CD8-positive, alpha-beta T cell (primary cell): ENCODE measurements at regions of chr4 and their contacts with region 1.

Region 1: DNA sequence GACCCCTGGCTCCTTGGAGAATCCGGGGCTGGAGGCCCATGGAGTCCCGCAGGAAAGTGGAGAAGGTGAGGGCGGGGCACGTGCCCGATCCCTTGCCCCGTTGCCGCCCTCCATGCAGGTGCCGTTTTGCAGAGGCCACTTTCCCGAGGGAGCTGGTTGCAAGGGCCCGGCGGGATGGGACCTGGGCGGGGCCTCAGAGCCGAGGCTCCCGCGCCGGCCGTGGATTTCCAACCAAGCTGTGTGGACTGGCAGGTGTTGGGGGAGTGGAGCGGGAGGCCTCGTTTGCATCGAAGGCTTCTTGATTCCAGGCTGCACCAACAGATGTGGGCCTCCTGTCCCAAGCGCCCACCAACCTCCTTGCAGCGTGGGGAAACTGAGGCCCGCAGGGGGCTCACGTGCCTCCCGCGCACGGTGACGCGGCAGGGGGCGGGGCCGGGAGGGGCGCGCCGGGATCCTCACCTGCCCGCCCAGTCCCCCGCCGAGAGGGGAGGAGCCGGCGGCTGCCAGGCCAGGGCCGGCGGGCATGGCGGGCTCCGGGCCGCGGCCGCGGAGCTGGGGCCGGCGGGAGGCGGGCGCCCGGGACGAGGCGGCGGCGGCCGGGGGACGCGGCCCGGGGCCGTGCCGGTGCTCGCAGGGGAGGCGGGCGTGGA is 24.9 kb downstream of the SH3BP2 start:
- DNase-seq: peak in 5 of 9 experiments; percentile 28 to 64 (median 52)
- ATAC-seq: peak; percentile 55
- H3K4me3 ChIP-seq: peak overlapping the region; percentile 39 to 45
- H3K4me3 Mint-ChIP-seq: peak overlapping the region; percentile 87
- H3K27ac ChIP-seq: peak overlapping the region in 1 of 2 experiments; percentile 37
- H3K27ac Mint-ChIP-seq: no peak overlapping the region
- H3K4me1 ChIP-seq: peaks cover 57% of the 10 kb centered on the region
- H3K4me1 Mint-ChIP-seq: peaks cover 63% of the 10 kb centered on the region
- H3K27me3 ChIP-seq: no peaks in the 10 kb centered on the region
- H3K27me3 Mint-ChIP-seq: no peaks in the 10 kb centered on the region
- CTCF ChIP-seq: no peak

Region 2: DNA sequence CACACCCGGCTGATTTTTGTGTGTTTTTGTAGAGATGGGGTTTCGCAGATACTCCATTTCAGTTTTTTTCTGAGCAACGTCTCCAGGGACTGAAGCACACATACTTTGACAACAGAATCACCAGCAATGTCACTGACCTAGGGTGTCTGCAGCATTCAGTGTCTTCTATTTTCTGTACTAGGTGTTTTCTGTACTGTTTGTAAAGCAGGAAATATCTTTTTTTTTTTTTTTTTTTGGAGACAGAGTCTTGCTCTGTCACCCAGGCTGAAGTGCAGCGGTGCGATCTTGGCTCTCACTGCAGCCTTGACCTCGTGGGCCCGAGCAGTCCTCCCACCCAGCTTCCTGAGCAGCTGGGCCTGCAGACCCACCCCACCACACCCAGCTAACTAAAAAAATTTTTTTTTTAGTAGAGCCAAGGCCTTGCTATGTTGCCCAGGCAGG is 34.7 kb after region 1 on chr4:
- CTCF ChIA-PET with region 1: interaction called, 4 read pairs
- POLR2A ChIA-PET with region 1: no interaction called
- intact Hi-C with region 1: loop called (anchors 5 kb)
- DNase-seq: peak in 2 of 9 experiments; percentile 35 to 56
- ATAC-seq: peak; percentile 72
- H3K4me3 ChIP-seq: no peak overlapping the region
- H3K4me3 Mint-ChIP-seq: peak overlapping the region; percentile 75
- H3K27ac ChIP-seq: peak overlapping the region; percentile 6 to 68
- H3K27ac Mint-ChIP-seq: peak overlapping the region; percentile 92
- H3K4me1 ChIP-seq: peaks cover 60% of the 10 kb centered on the region
- H3K4me1 Mint-ChIP-seq: peaks cover 71% of the 10 kb centered on the region
- H3K27me3 ChIP-seq: no peaks in the 10 kb centered on the region
- H3K27me3 Mint-ChIP-seq: no peaks in the 10 kb centered on the region
- CTCF ChIP-seq: no peak